Head of caudate nucleus (tissue), 42 donors: ENCODE measurements at regions of chr9 and their contacts with region 1.

Region 1: DNA sequence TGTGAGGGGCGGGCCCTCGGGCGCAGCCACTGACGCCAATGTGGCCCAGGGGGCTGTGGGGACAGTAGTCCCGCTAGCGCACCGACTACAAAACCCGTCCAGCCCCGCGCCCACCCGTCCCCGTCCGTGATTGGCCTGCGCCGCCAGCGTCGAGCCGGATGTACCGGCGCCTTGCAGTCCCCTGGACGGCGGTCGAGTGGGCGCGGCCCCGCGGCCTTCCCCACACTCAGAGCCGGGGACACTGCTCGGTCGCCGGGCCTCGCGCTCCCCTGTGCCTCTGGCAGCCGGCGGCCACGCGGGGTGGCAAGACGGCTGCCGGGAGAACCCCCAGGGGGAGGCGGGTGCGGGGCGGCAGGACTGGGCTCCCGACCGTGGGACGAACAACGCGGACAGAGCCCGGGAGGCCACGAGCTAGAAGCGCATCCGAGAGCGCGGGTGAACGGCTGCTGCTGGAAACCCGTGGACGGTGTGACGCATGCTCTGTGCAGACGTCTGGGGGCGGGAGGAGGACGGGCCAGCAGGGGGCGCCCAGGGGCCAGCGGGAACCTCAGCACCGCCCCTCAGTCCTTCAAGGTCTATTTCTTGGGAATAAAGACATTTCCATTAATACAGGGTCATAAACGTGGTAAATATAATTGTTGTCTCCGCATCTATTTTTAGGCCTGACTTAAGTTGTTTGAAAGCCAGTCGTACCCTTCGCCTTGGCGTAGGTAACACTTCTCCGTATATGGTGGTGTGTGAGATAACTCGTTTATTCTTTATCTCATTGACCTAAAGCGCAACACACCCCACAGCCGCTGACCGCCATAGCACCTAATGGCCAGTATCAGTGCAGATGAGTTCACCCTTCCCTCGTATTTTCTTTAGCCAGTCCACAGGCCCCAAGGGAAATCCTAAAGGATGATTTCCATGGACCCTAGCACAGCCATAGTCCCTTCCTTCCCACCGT is 629 bp upstream of the BICD2 start:
- DNase-seq: peak; percentile 86 to 100 (median 99)

Region 2: DNA sequence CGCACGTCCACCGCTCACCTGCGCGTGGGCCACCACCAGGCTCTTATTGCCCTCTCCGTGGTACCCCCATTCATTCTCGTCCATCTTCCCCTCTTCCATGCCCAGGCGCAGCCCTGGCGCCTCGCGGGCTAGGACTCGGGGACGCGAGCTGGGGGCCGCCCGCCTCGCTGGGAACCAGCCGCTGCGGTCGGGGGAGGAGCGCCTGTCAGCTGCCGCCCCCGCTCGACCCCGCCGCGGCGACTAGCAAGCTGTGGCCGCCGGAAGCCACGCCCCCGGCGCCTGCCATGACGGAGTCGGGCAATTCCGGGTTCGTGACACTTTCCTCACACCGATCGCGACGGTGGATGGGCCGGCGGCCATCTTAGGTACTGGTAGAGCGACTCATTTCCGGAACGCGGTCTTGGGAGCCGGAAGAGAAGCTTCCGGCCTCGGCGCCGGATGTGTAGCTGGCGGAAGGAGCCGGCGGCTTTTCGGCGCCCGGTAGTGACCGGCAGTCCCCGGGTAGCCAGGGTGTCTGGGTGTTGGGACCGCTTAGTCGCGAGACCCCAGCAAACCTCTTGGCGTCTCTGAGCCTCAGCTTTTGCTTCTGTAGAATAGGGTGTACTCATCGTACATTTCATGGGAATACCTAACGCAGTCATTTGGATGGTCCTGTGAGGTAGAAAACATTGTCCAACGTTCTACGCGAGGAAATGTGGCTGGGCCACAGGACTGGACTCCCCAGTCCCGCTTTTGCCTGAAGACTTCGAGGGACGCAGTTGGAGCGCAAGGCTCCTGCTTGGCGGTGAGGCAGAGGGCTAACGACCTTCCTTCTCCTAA is 95.2 kb before region 1 on chr9 and contains the start of gene IPPK:
- intact Hi-C with region 1: loop called (anchors 5 kb)
- DNase-seq: peak; percentile 95 to 99 (median 98)

Region 3: DNA sequence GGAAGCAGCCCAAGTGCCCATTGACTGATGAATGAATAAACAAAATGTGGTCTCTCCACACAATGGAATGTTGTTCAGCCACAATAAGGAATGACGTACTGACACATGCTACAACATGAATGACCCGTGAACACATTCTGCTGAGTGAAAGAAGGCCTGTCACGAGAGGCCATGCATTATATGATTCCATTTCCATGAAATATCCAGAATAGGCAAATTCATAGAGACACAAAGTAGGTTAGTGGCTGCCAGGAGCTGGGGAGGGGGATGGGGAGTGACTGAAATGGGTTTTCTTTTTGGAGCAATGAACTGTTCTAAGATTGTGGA is 42.0 kb before region 1 on chr9:
- intact Hi-C with region 1: loop called (anchors 2 kb)
- DNase-seq: peak in 27 of 42 donors; percentile 21 to 79 (median 45)